ENCODE measurements at regions of chr19 and their contacts with region 1.

Region 1: DNA sequence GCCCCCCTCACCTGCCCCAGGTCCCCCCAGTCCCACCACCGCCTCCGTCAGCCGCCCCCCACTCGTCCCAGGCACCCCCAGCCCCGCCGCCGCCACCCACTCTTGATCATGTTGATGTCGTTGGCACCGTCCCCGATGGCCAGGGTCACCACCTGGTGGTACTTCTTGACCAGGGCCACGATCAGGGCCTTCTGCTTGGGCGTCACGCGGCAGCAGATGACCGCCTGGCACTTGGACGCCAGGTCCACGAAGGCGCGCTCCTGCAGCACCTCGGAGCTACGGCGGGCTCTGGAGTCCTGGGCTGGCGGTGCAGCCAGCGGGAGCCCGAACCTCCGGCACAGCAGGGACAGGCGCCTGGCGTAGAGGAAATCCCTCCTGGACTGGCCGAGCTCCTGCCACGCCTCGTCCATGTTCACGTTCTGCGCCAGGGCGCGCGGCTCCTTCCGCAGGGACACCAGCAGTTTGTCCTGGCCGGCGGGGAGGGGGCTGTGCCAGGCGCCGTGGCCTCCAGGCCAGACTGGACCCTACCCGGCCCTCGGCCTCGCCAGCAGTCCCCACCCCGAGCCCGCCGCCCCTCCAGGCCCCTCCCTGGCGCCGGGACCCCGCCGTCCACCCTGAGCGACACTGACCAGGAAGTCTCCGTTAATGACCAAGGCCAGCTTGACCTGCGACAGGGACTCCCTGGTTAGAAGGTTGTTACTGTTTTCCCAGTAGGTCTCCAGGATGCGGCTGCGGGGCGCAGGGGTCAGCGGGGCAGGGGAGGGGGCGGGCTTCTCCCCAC is 22.6 kb downstream of the ATP8B3 start:
- DNase-seq: no peak
- H3K4me3 ChIP-seq: no peak overlapping the region
- H3K27ac ChIP-seq: no peak overlapping the region
- H3K4me1 ChIP-seq: no peaks in the 10 kb centered on the region
- H3K27me3 ChIP-seq: peaks cover 7% of the 10 kb centered on the region
- CTCF ChIP-seq: no peak
- POLR2A ChIP-seq: no peak

Region 2: GRCh38 chr19:1672038-1672768 is 117.2 kb before region 1 on chr19:
- intact Hi-C with region 1: loop called (anchors 10 kb)
- DNase-seq: no peak
- H3K4me3 ChIP-seq: no peak overlapping the region
- H3K27ac ChIP-seq: no peak overlapping the region
- H3K4me1 ChIP-seq: no peaks in the 10 kb centered on the region
- H3K27me3 ChIP-seq: peaks cover 34% of the 10 kb centered on the region
- CTCF ChIP-seq: peak; percentile 60 to 81 (median 70)
- POLR2A ChIP-seq: no peak